Endothelial cell of umbilical vein (primary cell): ENCODE measurements at regions of chr1 and their contacts with region 1.

Region 1: DNA sequence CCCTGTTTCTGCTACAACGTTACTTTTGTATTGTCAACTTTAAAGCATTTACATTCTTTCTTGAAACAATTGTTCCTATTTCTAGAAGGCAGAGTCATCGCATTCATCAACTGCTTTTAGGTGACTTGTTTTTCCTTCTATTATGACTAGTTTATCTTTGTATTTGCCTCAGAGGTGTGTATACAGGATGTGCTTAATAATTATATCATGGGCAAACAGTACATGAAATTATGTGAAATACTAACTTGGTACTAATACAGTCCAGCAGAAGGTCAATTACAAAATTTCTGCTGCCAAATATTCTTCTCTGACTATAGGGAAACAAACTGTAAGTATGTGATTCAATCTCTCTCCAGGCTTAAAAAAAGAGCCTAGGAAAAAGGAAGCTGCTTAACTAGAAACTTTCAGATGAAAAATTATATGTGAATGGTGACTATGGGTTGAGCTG is 101.6 kb downstream of the C4BPA start:
- DNase-seq: peak; percentile 80
- H3K4me3 ChIP-seq: peak overlapping the region in 1 of 3 experiments; percentile 40
- H3K27ac ChIP-seq: peak overlapping the region; percentile 77
- H3K4me1 ChIP-seq: peaks cover 16% of the 10 kb centered on the region
- H3K27me3 ChIP-seq: no peaks in the 10 kb centered on the region
- CTCF ChIP-seq: no peak
- POLR2A ChIP-seq: no peak

Region 2: DNA sequence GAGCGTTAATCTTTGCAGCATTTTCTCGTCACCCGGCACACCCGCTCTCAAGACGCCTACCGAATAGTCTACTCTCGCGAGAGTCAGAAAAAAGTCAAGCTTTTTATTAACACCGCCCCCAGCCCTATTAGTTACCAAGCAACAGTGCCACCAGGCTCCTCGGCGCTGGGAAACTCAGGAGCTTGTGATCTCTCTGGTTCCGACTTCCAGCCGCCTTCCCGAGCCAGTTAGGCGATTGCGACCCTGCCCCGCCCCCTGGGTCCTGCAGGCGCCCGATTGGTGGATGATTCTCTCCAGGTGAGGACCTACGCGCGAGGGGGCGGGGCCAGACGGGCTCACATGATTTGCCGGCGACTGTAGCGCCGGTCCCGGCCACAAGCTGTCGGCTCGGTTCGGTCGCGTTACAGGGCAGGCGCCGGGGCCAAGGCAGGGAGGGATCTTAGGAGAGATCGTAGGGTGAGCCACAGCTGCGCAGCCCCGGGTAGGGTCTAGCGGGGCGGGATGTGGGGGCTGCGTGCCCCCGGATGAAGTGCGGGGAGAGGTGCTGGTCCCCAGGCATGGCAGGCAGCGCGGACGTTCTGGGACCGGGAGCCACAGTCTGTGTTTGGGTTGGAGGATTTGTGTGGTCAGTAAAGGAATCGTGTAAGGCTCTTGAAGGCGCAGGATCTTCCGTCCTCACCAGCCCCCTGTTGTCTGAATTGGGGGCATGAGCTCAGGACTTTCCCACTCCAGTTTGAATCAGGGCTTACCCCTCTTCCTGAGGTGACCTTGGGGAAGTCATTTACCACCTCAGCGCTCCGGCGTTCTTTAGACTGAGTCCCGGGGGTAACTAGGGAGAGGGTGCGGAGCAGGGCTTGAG is 152.5 kb before region 1 on chr1 and contains the start of gene PFKFB2:
- CTCF ChIA-PET with region 1: no interaction called
- POLR2A ChIA-PET with region 1: no interaction called
- dilution Hi-C with region 1: no loop called
- intact Hi-C with region 1: loop called (anchors 5 kb)
- DNase-seq: peak; percentile 88
- H3K4me3 ChIP-seq: peak within 1 kb of the TSS; percentile 27 to 77 (median 62)
- H3K27ac ChIP-seq: no peak within 1 kb of the TSS
- H3K4me1 ChIP-seq: peaks cover 15% of the 10 kb centered on the region
- H3K27me3 ChIP-seq: peaks cover 0 to 2% of the 10 kb centered on the region in 2 experiments
- CTCF ChIP-seq: no peak
- POLR2A ChIP-seq: no peak
- total RNA-seq, gene PFKFB2: 1.8 and 2.0 TPM in 2 replicates

Region 3: DNA sequence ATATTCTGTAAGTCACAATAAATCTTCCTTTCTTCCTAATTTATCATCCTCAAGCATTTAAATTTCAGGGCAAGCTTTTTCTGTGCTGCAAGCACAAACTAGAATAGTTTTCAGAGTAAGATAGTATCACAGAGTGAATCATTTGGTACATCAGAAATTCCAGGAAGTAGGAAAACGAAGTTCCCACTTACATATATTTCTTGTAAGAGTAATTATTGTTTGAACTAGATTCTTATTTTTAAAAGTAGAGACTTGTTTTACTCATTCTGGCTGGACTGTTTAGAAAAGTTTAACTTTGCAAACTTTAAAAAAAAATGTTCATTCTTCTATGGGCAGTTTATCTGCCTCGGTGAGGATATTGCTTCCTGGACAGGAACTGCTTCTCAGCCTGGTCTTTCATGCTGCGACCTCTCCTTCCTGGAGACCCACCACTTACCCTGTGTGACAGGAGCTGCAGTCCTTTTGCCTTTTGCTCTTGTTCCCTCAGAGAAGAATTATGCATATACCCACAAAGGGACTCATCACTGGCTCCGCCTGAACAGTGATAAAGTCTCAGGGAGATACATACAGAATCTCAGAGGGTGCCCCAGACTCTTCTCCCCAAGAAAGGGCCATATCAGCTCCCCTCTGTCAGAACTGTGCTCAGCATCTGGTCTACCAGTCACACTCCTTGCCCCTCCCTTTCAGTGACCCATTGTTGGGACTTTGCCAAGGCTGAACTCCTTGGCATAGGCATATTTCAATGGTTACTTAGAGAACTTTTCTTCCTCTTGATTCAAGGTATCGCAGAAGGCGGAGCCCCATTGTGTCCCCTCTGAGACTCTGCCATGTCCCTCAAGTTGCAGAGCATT is 13.1 kb after region 1 on chr1:
- CTCF ChIA-PET with region 1: interaction called, 7 read pairs
- POLR2A ChIA-PET with region 1: no interaction called
- dilution Hi-C with region 1: no loop called
- intact Hi-C with region 1: loop called (anchors 1 kb)
- DNase-seq: peak; percentile 62
- H3K4me3 ChIP-seq: no peak overlapping the region
- H3K27ac ChIP-seq: peak overlapping the region; percentile 57
- H3K4me1 ChIP-seq: peaks cover 23% of the 10 kb centered on the region
- H3K27me3 ChIP-seq: no peaks in the 10 kb centered on the region
- CTCF ChIP-seq: no peak
- POLR2A ChIP-seq: no peak

Region 4: DNA sequence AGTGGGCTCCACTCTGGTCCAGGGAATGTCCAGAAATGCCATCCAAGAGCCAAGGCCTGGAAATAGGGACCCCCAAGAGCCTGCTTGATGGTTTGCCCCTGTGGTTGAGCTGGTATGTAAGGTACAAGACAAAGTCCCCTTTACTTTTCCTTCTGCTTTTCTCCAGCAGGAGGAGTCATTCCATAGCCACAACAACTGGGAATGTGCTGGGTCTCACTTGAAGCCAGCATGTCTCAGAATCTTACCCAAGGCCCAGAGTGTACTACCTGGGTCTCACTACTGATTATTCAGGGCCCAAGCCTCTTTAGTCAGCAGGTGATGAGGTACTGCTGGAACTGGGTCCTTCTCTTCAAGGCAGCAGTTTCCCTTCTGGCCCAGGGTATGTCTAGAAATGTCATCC is 53.8 kb after region 1 on chr1:
- CTCF ChIA-PET with region 1: interaction called, 3 read pairs
- POLR2A ChIA-PET with region 1: no interaction called
- dilution Hi-C with region 1: no loop called
- intact Hi-C with region 1: loop called (anchors 1 kb)
- DNase-seq: peak; percentile 78
- H3K4me3 ChIP-seq: no peak overlapping the region
- H3K27ac ChIP-seq: no peak overlapping the region
- H3K4me1 ChIP-seq: no peaks in the 10 kb centered on the region
- H3K27me3 ChIP-seq: no peaks in the 10 kb centered on the region
- CTCF ChIP-seq: peak; percentile 46 to 67
- POLR2A ChIP-seq: no peak

Region 5: DNA sequence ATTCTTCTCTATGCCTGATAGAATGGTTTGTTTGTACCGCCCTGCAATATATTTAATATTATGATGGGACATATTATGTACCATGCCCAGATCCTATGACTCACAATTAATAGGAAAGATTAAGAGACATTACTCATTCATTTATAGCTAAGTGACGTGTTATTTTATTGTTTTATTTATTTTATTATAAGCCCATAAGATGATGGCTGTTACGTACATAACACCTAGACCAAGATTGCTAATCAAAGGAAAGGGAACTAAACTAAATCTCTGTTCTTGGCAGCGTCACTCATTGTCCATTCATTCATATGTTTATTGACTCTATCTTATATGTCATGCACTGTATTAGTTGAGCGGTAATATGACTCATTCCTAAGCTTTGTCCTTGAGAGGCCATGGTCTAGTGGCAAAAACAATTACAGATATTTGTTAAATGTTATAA is 99.1 kb after region 1 on chr1:
- CTCF ChIA-PET with region 1: no interaction called
- POLR2A ChIA-PET with region 1: no interaction called
- dilution Hi-C with region 1: no loop called
- intact Hi-C with region 1: loop called (anchors 1 kb)
- DNase-seq: peak; percentile 97
- H3K4me3 ChIP-seq: no peak overlapping the region
- H3K27ac ChIP-seq: peak overlapping the region; percentile 91
- H3K4me1 ChIP-seq: peaks cover 37% of the 10 kb centered on the region
- H3K27me3 ChIP-seq: no peaks in the 10 kb centered on the region
- CTCF ChIP-seq: no peak
- POLR2A ChIP-seq: no peak

Region 6: GRCh38 chr1:207321079-207321789 is 115.6 kb after region 1 on chr1 and contains the start of gene CD55:
- CTCF ChIA-PET with region 1: interaction called, 7 read pairs
- POLR2A ChIA-PET with region 1: interaction called, 5 read pairs
- dilution Hi-C with region 1: no loop called
- intact Hi-C with region 1: loop called (anchors 1 kb)
- DNase-seq: peak; percentile 98
- H3K4me3 ChIP-seq: peak within 1 kb of the TSS; percentile 74 to 94 (median 87)
- H3K27ac ChIP-seq: peak within 1 kb of the TSS; percentile 92
- H3K4me1 ChIP-seq: peaks cover 17% of the 10 kb centered on the region
- H3K27me3 ChIP-seq: no peaks in the 10 kb centered on the region
- CTCF ChIP-seq: peak; percentile 35 to 43
- POLR2A ChIP-seq: peak; percentile 77
- total RNA-seq, gene CD55: 179 and 223 TPM in 2 replicates